AG04450 (cell line): ENCODE measurements at regions of chr1 and their contacts with region 1.

Region 1: GRCh38 chr1:171644805-171645483 is 7.5 kb downstream of the MYOC start:
- DNase-seq: peak; percentile 61
- H3K4me3 ChIP-seq: no peak overlapping the region
- H3K27ac ChIP-seq: no peak overlapping the region
- H3K27me3 ChIP-seq: no peaks in the 10 kb centered on the region
- CTCF ChIP-seq: peak; percentile 93

Region 2: DNA sequence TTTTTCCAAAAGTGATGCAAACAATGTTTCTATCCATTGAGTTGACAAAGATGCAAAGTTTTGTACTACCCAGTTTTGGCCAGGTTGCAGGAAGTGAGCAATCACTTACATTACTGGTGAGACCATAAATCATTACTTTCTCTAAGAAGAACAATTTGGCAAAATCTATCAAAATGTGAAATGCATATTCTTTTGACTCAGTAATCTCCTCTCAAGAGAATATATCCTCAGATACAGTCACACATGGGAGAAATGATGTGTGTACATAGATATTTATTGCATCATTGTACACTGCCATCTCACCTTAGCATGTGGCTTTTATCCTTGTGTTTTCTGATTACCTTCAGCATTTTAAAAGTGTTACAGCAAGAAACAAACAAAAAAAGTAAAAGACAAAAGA is 606.7 kb before region 1 on chr1:
- CTCF ChIA-PET with region 1: no interaction called
- POLR2A ChIA-PET with region 1: no interaction called
- DNase-seq: no peak
- H3K4me3 ChIP-seq: no peak overlapping the region
- H3K27ac ChIP-seq: no peak overlapping the region
- H3K27me3 ChIP-seq: no peaks in the 10 kb centered on the region
- CTCF ChIP-seq: no peak

Region 3: DNA sequence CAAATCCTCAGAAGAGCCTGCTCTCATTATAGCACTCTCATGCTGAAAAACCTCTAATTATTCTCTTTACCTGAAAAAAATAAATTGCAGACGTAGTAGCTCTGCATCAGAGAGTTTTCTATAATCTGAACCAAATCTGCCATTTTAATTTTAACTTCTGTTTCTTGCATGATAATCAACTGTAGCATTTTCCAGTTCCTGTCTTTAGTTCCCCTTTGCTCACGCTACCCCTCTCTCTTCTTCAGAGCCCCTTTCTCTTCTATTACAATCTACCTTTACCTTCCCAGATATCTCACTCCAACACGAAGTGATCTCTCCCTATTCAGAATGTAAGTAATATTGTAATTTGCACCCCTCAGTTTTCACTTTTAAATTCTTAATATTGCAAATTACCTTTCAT is 365.3 kb before region 1 on chr1:
- CTCF ChIA-PET with region 1: no interaction called
- POLR2A ChIA-PET with region 1: no interaction called
- DNase-seq: no peak
- H3K4me3 ChIP-seq: no peak overlapping the region
- H3K27ac ChIP-seq: no peak overlapping the region
- H3K27me3 ChIP-seq: peaks cover 2% of the 10 kb centered on the region
- CTCF ChIP-seq: no peak

Region 4: DNA sequence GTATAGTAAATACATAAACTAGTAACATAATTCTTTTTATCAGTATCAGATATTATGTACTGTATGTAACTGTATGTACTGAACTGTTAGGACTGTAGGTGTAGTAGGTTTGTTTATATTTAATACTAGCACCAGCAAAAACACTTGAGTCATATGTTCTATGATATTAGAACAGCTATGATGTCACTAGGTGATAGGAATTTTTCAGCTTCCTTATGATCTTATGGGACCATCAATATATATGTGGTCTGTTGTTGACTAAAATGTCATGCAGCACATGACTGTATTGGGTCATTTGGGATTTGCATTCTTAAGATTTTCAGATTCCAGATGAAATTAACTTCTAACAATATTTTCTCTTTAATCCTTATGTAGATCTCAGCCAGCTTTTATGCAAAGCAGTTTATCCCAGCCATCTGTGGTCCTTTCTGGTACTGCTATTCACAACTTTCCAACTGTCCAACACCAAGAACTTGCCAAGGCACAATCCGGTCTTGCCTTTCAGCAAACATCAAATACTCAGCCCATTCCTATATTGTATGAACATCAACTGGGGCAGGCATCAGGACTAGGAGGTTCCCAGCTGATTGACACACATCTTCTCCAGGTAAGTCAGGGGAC is 61.3 kb before region 1 on chr1:
- CTCF ChIA-PET with region 1: no interaction called
- POLR2A ChIA-PET with region 1: no interaction called
- DNase-seq: no peak
- H3K4me3 ChIP-seq: no peak overlapping the region
- H3K27ac ChIP-seq: no peak overlapping the region
- H3K27me3 ChIP-seq: no peaks in the 10 kb centered on the region
- CTCF ChIP-seq: no peak

Region 5: DNA sequence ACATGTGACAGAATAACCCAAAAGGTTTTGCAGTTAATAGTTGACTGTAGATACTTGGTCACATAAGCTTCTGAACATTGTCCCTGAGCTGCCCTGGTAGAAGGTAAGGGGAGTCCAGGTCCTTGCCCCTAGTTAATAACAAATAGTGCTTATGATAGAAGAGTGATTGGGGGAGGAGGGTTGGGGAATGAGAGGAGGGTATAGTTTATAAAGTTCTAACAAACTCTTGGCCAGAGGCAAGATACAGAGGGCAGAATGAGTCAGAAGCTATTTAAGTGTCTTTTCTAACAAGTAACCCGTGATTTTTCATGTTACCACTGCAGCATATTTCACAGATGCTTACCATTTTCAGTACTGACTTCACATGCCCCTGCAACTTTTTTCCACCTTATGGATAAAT is 49.6 kb before region 1 on chr1:
- CTCF ChIA-PET with region 1: interaction called, 11 read pairs
- POLR2A ChIA-PET with region 1: no interaction called
- DNase-seq: no peak
- H3K4me3 ChIP-seq: no peak overlapping the region
- H3K27ac ChIP-seq: no peak overlapping the region
- H3K27me3 ChIP-seq: no peaks in the 10 kb centered on the region
- CTCF ChIP-seq: no peak

Region 6: DNA sequence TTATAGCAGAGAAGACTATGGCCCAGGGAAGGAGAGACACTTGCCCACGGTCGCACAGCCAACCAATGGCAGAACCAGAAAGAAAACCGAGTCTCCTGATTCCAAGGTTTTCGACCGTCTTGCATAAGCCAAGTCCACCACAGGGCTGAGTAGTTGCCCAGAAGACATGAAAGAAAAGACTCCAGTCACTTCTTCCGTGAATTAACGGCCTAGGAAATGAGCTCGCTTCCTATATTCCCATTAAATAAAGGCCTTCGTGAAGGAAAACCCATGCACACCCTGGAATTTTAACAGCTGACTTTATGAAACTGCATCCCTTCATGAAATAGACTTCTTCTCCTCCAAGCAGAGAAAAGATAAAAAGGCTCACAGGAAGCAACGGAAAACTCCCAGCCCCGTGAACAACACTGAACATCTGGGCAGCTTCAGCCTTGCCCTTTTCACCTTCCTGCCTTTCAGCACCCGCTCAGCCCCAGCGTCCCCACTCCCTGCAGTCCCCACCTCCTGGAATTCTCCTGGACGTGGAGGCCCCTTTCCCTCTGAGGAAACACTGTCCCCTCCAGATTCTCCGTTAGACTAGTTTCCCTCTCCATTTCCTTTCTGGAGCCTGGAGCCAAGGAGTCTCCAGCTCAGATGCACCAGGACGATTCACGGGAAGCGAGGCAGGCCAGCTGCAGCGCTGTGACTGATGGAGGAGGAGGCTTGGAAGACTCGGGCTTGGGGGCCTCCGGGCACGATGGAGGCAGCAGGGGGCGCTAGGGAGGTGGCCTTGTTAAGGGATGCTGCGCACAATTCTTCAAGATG is 10.2 kb after region 1 on chr1:
- CTCF ChIA-PET with region 1: interaction called, 57 read pairs
- POLR2A ChIA-PET with region 1: no interaction called
- DNase-seq: no peak
- H3K4me3 ChIP-seq: no peak overlapping the region
- H3K27ac ChIP-seq: no peak overlapping the region
- H3K27me3 ChIP-seq: no peaks in the 10 kb centered on the region
- CTCF ChIP-seq: peak; percentile 66

Region 7: DNA sequence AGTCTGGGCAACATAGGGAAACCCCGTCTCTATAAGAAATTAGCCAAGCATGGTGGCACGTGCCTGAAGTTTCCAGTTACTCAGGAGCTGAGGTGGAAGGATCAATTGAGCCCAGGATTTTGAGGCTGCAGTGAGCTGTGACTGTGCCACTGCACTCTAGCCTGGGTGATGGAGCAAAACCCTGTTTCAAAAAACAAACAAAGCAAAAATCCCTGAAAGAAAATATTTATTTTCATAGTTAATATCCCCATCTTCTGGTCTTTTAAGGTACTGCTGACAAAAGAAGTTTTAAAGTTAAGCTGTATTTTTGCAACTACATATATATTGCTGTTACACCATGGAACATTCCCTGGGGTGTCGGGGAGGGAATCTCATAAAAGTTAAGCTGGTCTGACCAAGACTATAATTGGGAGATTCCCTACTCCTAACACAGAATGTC is 70.9 kb after region 1 on chr1:
- CTCF ChIA-PET with region 1: interaction called, 101 read pairs
- POLR2A ChIA-PET with region 1: no interaction called
- DNase-seq: no peak
- H3K4me3 ChIP-seq: no peak overlapping the region
- H3K27ac ChIP-seq: no peak overlapping the region
- H3K27me3 ChIP-seq: no peaks in the 10 kb centered on the region
- CTCF ChIP-seq: peak; percentile 50

Region 8: GRCh38 chr1:171801487-171801891 is 156.5 kb after region 1 on chr1:
- CTCF ChIA-PET with region 1: interaction called, 60 read pairs
- POLR2A ChIA-PET with region 1: no interaction called
- DNase-seq: no peak
- H3K4me3 ChIP-seq: no peak overlapping the region
- H3K27ac ChIP-seq: no peak overlapping the region
- H3K27me3 ChIP-seq: no peaks in the 10 kb centered on the region
- CTCF ChIP-seq: peak; percentile 91